ENCODE measurements at regions of chr6 and their contacts with region 1.

Region 1: DNA sequence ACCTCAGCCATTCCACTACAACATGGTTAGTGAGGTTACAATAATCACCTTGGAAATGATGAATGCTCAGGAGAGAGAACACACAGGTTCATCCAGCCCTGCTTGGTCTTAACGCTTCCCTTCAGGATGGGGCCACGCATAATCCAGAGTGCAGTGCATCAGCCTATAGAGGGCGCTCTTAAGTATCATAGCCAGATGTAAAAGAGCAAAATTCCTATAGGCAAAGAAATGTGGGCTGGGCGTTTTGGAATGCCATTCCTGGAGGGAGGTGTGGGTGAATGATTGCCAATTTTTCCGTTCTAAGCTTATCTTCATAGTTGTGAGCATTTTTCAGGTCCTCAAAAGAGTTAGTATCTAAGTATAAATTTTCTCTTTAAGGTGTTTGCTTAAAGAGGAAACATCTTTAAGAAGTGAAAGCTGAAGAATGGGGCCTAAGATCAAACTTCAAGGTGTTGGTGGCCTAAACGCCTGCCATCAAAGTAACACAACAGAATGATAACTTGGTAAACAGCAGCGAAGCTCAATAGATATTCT is 1.8 kb downstream of the RIPOR2 start:
- DNase-seq: peak; percentile 61
- ATAC-seq: peak; percentile 81
- H3K4me3 Mint-ChIP-seq: peak overlapping the region; percentile 32
- H3K27ac Mint-ChIP-seq: 0 out of 2 replicates have a peak overlapping the region, but pooled peaks have one; percentile 33
- H3K4me1 Mint-ChIP-seq: peaks cover 66% of the 10 kb centered on the region
- H3K27me3 Mint-ChIP-seq: no peaks in the 10 kb centered on the region
- CTCF ChIP-seq: peak; percentile 79

Region 2: GRCh38 chr6:24802271-24803059 is 131.5 kb before region 1 on chr6:
- CTCF ChIA-PET with region 1: no interaction called
- POLR2A ChIA-PET with region 1: no interaction called
- DNase-seq: no peak
- ATAC-seq: no peak
- H3K4me3 Mint-ChIP-seq: no peak overlapping the region
- H3K27ac Mint-ChIP-seq: peak overlapping the region; percentile 89; the same call in 1 of the 2 replicates
- H3K4me1 Mint-ChIP-seq: peaks cover 11% of the 10 kb centered on the region
- H3K27me3 Mint-ChIP-seq: no peaks in the 10 kb centered on the region
- CTCF ChIP-seq: no peak

Region 3: DNA sequence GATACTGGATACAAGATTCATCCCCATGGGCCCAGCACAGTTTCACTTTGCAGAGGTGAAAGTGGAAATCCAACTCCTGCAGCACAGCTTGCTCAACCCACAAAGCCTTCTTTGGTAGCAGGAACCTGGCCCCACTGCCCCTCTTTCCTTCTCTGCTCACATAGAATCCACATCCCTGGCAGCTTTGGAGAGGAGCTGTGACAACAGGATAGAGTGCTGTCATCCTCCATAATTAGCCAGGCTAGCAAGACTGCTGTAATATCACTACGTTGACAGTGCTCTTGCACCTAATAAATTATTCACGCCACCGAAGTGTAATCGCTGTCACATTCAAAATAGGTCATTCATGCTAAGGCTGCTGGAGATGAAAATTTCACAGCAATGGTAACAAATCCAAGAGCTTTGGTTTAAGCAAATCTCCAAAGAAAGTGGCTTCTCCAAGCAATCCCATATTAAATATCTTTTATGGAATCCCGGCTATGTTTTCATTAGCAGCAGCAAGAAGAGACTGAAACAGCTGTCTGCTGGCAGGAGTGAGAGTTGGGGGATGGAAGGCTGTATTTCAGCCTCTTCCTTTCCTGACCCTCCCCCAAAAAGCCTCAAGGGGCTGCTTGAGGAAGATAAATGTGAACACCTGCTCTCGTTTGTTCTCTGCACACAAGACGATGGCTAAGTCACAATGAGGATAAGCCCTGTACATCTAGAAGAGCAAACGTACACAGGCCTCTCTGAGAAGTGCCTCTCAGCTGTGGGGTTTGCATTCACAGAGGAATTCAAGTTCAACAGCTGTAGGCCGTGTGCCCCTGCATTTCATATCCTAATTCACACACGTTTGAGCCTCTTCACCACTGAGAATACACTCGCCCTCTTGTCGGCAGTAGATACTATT is 14.7 kb before region 1 on chr6:
- CTCF ChIA-PET with region 1: interaction called, 43 read pairs
- POLR2A ChIA-PET with region 1: no interaction called
- DNase-seq: peak; percentile 18
- ATAC-seq: peak; percentile 32
- H3K4me3 Mint-ChIP-seq: no peak overlapping the region
- H3K27ac Mint-ChIP-seq: peak overlapping the region; percentile 80
- H3K4me1 Mint-ChIP-seq: peaks cover 50% of the 10 kb centered on the region
- H3K27me3 Mint-ChIP-seq: no peaks in the 10 kb centered on the region
- CTCF ChIP-seq: no peak

Measured in WTC11 (cell line).